ENCODE measurements at regions of chr11 and their contacts with region 1.

Region 1: GRCh38 chr11:69296890-69297786 is 3.2 kb downstream of the MYEOV start:
- DNase-seq: peak; percentile 99
- H3K4me3 ChIP-seq: peak overlapping the region; percentile 97
- H3K27ac ChIP-seq: peak overlapping the region; percentile 98
- H3K4me1 ChIP-seq: peaks cover 55% of the 10 kb centered on the region
- H3K27me3 ChIP-seq: no peaks in the 10 kb centered on the region
- CTCF ChIP-seq: no peak

Region 2: DNA sequence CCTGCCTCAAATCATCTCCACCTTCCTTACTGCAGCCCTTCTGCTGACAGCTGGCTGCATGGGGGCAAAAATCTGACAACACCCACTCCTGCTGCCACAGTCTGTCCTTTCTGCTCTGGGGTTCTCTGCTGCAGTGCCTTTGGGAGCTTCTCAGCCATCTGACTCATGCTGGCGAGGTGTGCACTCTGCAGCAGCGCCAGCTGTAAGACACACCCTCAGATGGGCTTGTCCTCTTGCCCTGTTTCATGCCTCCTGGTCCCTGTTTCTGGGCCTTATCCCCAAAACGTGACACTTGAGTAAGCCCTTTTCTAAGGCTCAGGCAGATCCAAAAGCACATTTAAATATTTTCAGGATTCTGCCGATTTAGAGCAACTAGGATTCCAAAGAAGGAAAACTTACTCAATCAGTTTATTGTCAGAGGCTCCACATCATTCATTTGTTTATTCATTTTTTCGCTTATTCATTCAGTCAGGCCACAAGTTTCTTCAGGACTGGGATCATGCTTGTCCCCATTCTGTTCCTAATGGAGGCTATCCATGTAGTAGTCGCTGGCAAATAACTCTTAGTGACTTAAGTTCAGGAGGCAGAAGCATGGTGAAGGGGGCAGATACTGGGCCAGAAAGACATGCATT is 81.2 kb before region 1 on chr11:
- CTCF ChIA-PET with region 1: no interaction called
- POLR2A ChIA-PET with region 1: interaction called, 10 read pairs
- intact Hi-C with region 1: loop called (anchors 5 kb)
- DNase-seq: peak; percentile 45 to 64
- H3K4me3 ChIP-seq: no peak overlapping the region
- H3K27ac ChIP-seq: no peak overlapping the region
- H3K4me1 ChIP-seq: peaks cover 12% of the 10 kb centered on the region
- H3K27me3 ChIP-seq: no peaks in the 10 kb centered on the region
- CTCF ChIP-seq: no peak

Region 3: DNA sequence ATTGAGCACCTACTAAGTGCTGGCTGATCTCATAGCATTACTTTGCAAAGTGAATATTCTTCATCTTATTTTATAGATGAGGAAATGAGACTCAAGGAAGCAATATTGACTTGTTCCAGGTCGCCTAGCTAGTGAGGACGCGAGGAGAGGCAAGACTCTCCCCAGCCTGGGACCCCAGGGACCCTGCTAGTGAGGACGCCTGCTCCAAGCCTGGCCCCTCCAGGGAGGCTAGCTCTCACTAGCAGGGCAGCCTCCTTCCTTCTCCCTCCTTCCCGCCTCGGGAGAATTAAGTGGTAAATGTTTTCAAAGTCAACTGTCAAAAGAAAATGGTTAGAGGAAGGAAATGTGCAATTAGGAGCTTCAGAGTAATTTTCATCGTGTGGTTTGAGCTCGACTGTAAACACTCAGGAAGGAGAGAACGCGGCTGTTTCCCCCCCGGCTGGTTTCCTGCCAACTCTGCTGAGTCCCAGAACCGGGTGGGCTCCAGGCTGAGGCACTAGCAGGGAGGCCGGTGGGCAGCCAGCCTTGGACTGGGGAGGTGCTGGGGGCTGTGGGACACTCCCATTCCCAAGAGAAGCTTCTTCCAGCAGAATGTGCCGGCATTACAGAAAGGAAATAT is 14.7 kb after region 1 on chr11:
- CTCF ChIA-PET with region 1: no interaction called
- POLR2A ChIA-PET with region 1: interaction called, 10 read pairs
- intact Hi-C with region 1: no loop called
- DNase-seq: no peak
- H3K4me3 ChIP-seq: no peak overlapping the region
- H3K27ac ChIP-seq: peak overlapping the region; percentile 40
- H3K4me1 ChIP-seq: peaks cover 39% of the 10 kb centered on the region
- H3K27me3 ChIP-seq: no peaks in the 10 kb centered on the region
- CTCF ChIP-seq: no peak

Region 4: GRCh38 chr11:69382131-69383128 is 85.3 kb after region 1 on chr11:
- CTCF ChIA-PET with region 1: no interaction called
- POLR2A ChIA-PET with region 1: interaction called, 4 read pairs
- intact Hi-C with region 1: loop called (anchors 1 kb)
- DNase-seq: peak; percentile 82 to 88
- H3K4me3 ChIP-seq: peak overlapping the region; percentile 43; the same call in 1 of the 2 replicates
- H3K27ac ChIP-seq: peak overlapping the region; percentile 59
- H3K4me1 ChIP-seq: peaks cover 30% of the 10 kb centered on the region
- H3K27me3 ChIP-seq: no peaks in the 10 kb centered on the region
- CTCF ChIP-seq: no peak

Region 5: GRCh38 chr11:69497221-69497787 is 200.2 kb after region 1 on chr11:
- CTCF ChIA-PET with region 1: no interaction called
- POLR2A ChIA-PET with region 1: interaction called, 9 read pairs
- intact Hi-C with region 1: loop called (anchors 5 kb)
- DNase-seq: peak; percentile 81 to 93
- H3K4me3 ChIP-seq: no peak overlapping the region
- H3K27ac ChIP-seq: no peak overlapping the region
- H3K4me1 ChIP-seq: peaks cover 14% of the 10 kb centered on the region
- H3K27me3 ChIP-seq: peaks cover 18% of the 10 kb centered on the region
- CTCF ChIP-seq: no peak

Region 6: GRCh38 chr11:70082829-70083228 is 785.7 kb after region 1 on chr11:
- CTCF ChIA-PET with region 1: no interaction called
- POLR2A ChIA-PET with region 1: no interaction called
- intact Hi-C with region 1: no loop called
- DNase-seq: no peak
- H3K4me3 ChIP-seq: no peak overlapping the region
- H3K27ac ChIP-seq: peak overlapping the region; percentile 31
- H3K4me1 ChIP-seq: peaks cover 56% of the 10 kb centered on the region
- H3K27me3 ChIP-seq: no peaks in the 10 kb centered on the region
- CTCF ChIP-seq: peak; percentile 44

Region 7: GRCh38 chr11:70128435-70128906 is 831.3 kb after region 1 on chr11:
- CTCF ChIA-PET with region 1: no interaction called
- POLR2A ChIA-PET with region 1: interaction called, 14 read pairs
- intact Hi-C with region 1: no loop called
- DNase-seq: peak; percentile 51 to 78
- H3K4me3 ChIP-seq: no peak overlapping the region
- H3K27ac ChIP-seq: peak overlapping the region; percentile 18; the same call in 1 of the 2 replicates
- H3K4me1 ChIP-seq: peaks cover 22% of the 10 kb centered on the region
- H3K27me3 ChIP-seq: no peaks in the 10 kb centered on the region
- CTCF ChIP-seq: 0 out of 2 replicates have a peak, but pooled peaks have one; percentile 26